ENCODE measurements at regions of chr1 and their contacts with region 1.

Region 1: GRCh38 chr1:36609241-36610027 is 126.7 kb upstream of the CSF3R start:
- DNase-seq: peak; percentile 86
- ATAC-seq: peak; percentile 96
- H3K4me3 Mint-ChIP-seq: no peak overlapping the region
- H3K27ac Mint-ChIP-seq: no peak overlapping the region
- H3K4me1 Mint-ChIP-seq: no peaks in the 10 kb centered on the region
- H3K27me3 Mint-ChIP-seq: no peaks in the 10 kb centered on the region
- CTCF ChIP-seq: peak; percentile 80

Region 2: DNA sequence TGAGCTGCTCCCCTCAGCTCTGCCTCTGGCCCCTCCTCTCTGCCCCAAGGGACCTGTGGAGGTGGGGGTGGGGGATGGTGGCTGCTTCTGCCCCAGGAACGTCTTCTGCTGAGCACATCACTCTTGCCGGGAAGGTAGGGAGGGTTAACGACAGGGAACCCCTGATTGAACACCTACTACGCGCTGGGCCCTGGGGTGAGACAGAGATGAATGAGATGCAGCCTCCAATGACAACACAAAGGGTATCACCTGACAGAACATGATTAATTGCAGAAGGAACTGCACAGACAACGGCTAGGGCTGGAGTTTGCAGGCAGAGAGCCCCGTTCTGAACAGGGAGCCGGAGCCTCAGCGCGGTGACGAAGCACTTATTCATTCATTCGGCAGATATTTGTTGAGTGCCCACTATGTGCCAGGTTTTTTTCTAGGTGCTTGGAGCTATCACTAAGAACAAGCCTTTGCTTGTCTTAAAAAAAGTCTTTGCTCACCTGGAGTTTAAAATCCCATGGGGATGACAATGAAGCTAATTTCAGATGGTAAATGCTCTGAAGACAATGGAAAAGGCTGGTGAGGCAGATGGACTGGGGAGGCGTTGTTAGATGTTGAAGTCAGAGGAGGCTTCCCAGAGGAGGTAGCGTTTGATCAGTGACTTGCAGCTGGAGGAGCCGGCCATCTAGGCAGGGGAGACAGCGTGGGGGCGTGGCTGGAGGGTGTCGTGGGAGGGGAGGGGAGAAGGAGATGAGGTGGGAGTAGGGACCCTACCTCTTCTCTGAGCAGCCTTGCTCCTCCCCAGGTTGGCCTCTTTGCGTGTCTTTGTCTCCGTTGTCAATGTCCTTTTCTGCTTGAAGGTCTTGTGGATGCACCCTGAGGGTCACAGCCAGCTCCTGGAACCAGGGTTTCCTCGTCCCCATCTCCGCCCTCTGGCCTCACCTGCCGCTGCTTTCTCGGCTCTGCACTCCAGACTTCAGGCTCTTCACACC is 23.6 kb before region 1 on chr1:
- CTCF ChIA-PET with region 1: interaction called, 11 read pairs
- POLR2A ChIA-PET with region 1: no interaction called
- DNase-seq: no peak
- ATAC-seq: no peak; the same call in 1 of the 2 replicates
- H3K4me3 Mint-ChIP-seq: no peak overlapping the region
- H3K27ac Mint-ChIP-seq: no peak overlapping the region
- H3K4me1 Mint-ChIP-seq: peaks cover 74% of the 10 kb centered on the region
- H3K27me3 Mint-ChIP-seq: no peaks in the 10 kb centered on the region; the same call in 1 of the 2 replicates
- CTCF ChIP-seq: no peak

Region 3: DNA sequence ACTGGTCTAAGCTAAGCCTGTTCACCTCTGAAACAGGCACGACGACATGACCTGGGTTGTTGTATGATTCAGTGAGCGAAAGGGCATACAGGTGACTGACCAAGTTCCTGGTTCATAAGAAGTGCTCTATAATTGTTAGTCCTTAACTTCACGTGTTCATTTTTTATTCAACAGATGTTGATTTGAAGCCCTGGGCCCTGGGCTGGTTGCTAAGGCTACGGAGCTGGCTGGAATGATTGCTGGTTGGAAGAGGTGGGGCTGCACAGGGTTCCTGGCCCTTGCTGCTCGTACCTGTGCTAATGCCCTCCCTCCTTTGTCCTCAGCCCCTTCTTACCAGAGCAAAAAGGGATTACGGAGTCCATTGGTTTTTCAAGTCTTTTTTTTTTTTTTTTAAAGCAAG is 15.4 kb before region 1 on chr1:
- CTCF ChIA-PET with region 1: interaction called, 22 read pairs
- POLR2A ChIA-PET with region 1: no interaction called
- DNase-seq: no peak
- ATAC-seq: no peak
- H3K4me3 Mint-ChIP-seq: no peak overlapping the region
- H3K27ac Mint-ChIP-seq: no peak overlapping the region
- H3K4me1 Mint-ChIP-seq: peaks cover 19% of the 10 kb centered on the region
- H3K27me3 Mint-ChIP-seq: no peaks in the 10 kb centered on the region; the same call in 1 of the 2 replicates
- CTCF ChIP-seq: no peak

Region 4: DNA sequence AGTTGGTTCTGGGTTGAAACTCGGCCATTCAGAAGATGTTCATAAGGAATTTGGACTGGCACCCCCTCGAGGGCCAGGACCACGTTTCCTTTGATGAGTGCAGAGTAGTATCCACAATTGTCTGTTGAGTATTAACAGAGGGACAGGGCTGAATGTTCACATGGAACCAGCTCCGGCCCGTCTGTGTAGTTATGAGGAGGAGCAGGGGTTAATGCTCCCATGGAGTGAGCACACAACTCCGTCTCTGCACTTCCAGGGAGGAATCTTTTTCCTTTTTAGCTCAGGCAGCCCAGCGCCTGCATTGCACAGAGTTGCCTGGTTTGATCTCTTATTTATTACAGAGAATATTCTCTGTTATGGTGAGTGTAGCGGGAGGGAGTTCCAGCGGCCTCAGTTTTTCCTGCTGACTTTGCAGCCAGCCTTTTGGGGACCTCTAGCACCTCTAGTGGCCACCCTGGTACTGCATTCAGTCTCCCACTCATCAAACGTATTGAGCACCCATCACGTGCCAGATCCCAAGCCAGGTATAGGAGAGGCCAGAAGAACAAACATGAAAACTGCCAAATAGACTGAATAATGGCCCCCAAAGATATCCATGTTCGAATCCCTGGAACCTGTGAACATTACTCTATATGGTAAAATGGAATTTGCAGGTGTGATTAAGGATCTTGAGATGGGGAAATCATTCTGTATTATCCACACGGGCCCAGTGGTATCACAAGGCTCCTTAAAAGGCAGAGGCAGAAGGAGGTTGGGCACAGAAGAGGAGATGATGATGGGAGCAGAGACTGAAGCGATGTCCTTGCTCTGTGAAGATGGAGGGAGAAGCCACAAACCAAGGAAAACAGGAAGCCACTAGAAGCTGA is 41.0 kb after region 1 on chr1:
- CTCF ChIA-PET with region 1: interaction called, 37 read pairs
- POLR2A ChIA-PET with region 1: no interaction called
- DNase-seq: peak; percentile 89
- ATAC-seq: peak; percentile 94
- H3K4me3 Mint-ChIP-seq: no peak overlapping the region
- H3K27ac Mint-ChIP-seq: no peak overlapping the region
- H3K4me1 Mint-ChIP-seq: peaks cover 13% of the 10 kb centered on the region
- H3K27me3 Mint-ChIP-seq: peaks cover 11% of the 10 kb centered on the region; the same call in 1 of the 2 replicates
- CTCF ChIP-seq: peak; percentile 81